Dendritic cell treated with granulocyte-macrophage colony-stimulating factor and Interleukin-4, amounts not matched to agents 40 ng/mL and 50 ng/mL, for 4 days (primary cell): ENCODE measurements at regions of chr2 and their contacts with region 1.

Region 1: DNA sequence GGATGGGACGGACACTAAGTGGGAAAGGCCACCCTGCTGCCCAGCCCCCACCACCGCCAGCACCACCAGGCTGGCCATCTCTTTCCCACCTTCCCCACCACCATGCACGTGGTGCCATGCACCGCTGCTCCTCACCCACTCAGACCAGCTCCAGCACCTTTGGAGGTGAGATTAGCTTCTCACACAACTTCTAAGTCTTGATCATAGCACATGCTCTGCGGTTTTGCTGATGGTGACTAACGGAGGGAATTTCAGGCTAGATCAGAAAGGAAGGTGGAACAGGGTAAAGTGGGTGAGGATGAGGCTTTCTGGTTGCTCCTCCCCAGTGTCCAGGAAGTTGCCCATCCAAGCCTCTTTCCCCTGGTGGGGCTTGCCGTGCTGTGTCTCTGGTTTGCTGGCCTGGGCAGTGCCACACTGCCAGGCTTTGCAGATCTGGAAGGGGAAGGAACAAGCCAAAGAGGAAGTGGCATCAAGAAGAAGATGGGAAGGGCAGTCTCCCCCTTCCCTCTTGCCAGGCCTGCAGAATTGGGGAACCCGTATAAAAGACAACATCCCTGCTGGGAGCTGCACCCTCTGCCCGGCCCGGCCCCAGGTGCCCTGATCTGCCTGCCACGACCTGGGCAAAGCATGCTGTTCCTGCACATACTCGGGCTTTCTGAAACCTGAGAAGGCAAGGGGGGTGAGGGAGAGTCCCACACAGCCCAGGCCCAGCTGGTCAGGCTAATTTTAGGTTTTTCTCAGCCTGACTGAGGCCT is 44.3 kb upstream of the CAB39 start:
- H3K4me3 Mint-ChIP-seq: peak overlapping the region; percentile 41
- H3K27ac Mint-ChIP-seq: peak overlapping the region; percentile 89
- H3K4me1 Mint-ChIP-seq: peaks cover 78% of the 10 kb centered on the region
- H3K27me3 Mint-ChIP-seq: no peaks in the 10 kb centered on the region

Region 2: DNA sequence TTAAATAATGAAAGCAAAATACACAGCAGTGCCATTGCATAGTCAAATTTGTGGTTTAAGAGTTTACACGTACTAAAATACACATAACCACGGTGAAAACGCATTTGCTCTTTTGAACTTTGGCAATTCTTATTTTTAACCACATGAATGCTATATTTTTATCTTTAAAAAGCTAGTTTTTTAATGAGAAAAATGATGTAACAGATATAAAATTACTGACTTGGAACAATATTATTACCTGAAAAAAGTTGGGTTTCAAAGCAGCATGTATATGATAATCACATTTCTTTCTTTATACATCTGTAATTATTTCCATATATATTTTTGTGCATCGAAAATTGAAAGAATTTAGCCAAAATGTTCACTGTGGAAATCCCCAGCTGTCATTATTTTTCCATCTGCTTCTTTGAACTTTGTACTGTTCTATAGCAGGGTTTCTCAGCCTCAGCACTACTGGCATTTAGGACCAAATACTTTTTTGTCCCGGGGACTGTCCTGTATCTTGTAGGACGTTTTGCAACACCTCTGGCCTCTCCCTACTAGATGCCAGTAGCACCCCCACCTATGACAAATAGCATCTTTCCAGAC is 31.6 kb before region 1 on chr2:
- intact Hi-C with region 1: no loop called
- H3K4me3 Mint-ChIP-seq: no peak overlapping the region
- H3K27ac Mint-ChIP-seq: no peak overlapping the region
- H3K4me1 Mint-ChIP-seq: no peaks in the 10 kb centered on the region
- H3K27me3 Mint-ChIP-seq: no peaks in the 10 kb centered on the region

Region 3: GRCh38 chr2:230678451-230678850 is 10.1 kb after region 1 on chr2:
- intact Hi-C with region 1: loop called (anchors 1 kb)
- H3K4me3 Mint-ChIP-seq: peak overlapping the region; percentile 41
- H3K27ac Mint-ChIP-seq: peak overlapping the region; percentile 76
- H3K4me1 Mint-ChIP-seq: peaks cover 86% of the 10 kb centered on the region
- H3K27me3 Mint-ChIP-seq: peaks cover 7% of the 10 kb centered on the region